Activated naive CD4-positive, alpha-beta T cell treated with anti-CD3 and anti-CD28 coated beads for 36 hours (primary cell): ENCODE measurements at regions of chr11 and their contacts with region 1.

Region 1: GRCh38 chr11:2400069-2400760 is at the start of gene TSSC4:
- DNase-seq: peak; percentile 99
- H3K4me3 Mint-ChIP-seq: peak within 1 kb of the TSS; percentile 84
- H3K27ac Mint-ChIP-seq: peak within 1 kb of the TSS; percentile 87
- H3K4me1 Mint-ChIP-seq: peaks cover 16% of the 10 kb centered on the region
- H3K27me3 Mint-ChIP-seq: no peaks in the 10 kb centered on the region
- total RNA-seq, gene TSSC4: 41.9 to 42.0 TPM

Region 2: GRCh38 chr11:2298795-2299761 is 101.1 kb before region 1 on chr11:
- CTCF ChIA-PET with region 1: interaction called, 38 read pairs
- intact Hi-C with region 1: loop called (anchors 1 kb)
- DNase-seq: peak; percentile 53
- H3K4me3 Mint-ChIP-seq: no peak overlapping the region
- H3K27ac Mint-ChIP-seq: peak overlapping the region; percentile 50
- H3K4me1 Mint-ChIP-seq: peaks cover 36% of the 10 kb centered on the region
- H3K27me3 Mint-ChIP-seq: no peaks in the 10 kb centered on the region

Region 3: GRCh38 chr11:2377511-2378443 is 22.4 kb before region 1 on chr11:
- CTCF ChIA-PET with region 1: interaction called, 7 read pairs
- intact Hi-C with region 1: loop called (anchors 1 kb)
- DNase-seq: peak; percentile 56
- H3K4me3 Mint-ChIP-seq: peak overlapping the region; percentile 84
- H3K27ac Mint-ChIP-seq: peak overlapping the region; percentile 79
- H3K4me1 Mint-ChIP-seq: peaks cover 32% of the 10 kb centered on the region
- H3K27me3 Mint-ChIP-seq: no peaks in the 10 kb centered on the region

Region 4: GRCh38 chr11:2444821-2445745 is 44.9 kb after region 1 on chr11 and contains the start of gene KCNQ1:
- CTCF ChIA-PET with region 1: no interaction called
- intact Hi-C with region 1: loop called (anchors 1 kb)
- DNase-seq: peak; percentile 40
- H3K4me3 Mint-ChIP-seq: peak within 1 kb of the TSS; percentile 89
- H3K27ac Mint-ChIP-seq: no peak within 1 kb of the TSS
- H3K4me1 Mint-ChIP-seq: peaks cover 26% of the 10 kb centered on the region
- H3K27me3 Mint-ChIP-seq: no peaks in the 10 kb centered on the region
- total RNA-seq, gene KCNQ1: 10.6 to 10.8 TPM

Region 5: GRCh38 chr11:2549876-2550620 is 149.8 kb after region 1 on chr11:
- CTCF ChIA-PET with region 1: no interaction called
- intact Hi-C with region 1: no loop called
- DNase-seq: no peak
- H3K4me3 Mint-ChIP-seq: no peak overlapping the region
- H3K27ac Mint-ChIP-seq: no peak overlapping the region
- H3K4me1 Mint-ChIP-seq: peaks cover 9% of the 10 kb centered on the region
- H3K27me3 Mint-ChIP-seq: no peaks in the 10 kb centered on the region

Region 6: GRCh38 chr11:2586087-2586792 is 186.0 kb after region 1 on chr11:
- CTCF ChIA-PET with region 1: no interaction called
- intact Hi-C with region 1: no loop called
- DNase-seq: no peak
- H3K4me3 Mint-ChIP-seq: no peak overlapping the region
- H3K27ac Mint-ChIP-seq: no peak overlapping the region
- H3K4me1 Mint-ChIP-seq: no peaks in the 10 kb centered on the region
- H3K27me3 Mint-ChIP-seq: no peaks in the 10 kb centered on the region

Region 7: DNA sequence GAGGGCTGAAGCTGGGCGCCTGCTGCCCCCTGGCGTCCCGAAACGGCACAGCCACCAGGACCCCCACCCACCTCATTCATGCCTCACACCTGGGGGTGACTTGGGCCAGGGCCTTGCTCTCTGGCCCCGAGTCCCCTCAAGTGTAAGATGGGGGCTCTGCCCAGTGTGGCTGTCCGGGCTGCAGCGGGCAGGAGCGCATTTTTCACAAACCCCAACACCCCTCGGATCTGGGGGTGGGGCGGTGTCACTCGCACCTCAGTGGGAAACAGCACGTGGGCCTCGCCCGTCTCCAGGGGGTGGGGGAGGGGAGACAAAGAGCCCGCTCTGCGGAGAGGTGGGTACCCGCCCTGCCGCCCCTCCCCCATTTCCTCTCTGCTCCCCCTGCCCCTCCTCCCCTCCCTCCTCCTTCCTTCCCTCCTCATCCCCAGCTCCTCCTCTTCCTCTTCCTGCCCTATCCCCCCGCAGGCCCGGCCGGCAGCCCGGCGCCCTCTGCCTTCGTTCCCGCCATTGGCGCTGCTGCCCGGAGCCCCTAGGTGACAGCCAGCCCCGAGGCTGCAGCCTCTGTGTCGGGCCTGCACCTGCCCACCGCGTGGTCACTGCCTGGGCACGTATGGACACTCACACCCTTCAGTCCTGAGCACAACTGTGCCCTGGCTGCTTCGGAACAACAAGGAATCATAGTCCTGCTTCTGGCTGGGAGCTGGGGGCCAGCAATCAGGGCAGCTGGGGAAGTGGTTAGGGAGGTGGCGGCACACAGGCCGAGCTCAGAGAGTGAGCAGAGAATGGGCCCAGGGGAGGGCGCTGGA is 492.2 kb after region 1 on chr11:
- CTCF ChIA-PET with region 1: no interaction called
- intact Hi-C with region 1: loop called (anchors 1 kb)
- DNase-seq: peak; percentile 79
- H3K4me3 Mint-ChIP-seq: peak overlapping the region; percentile 84
- H3K27ac Mint-ChIP-seq: peak overlapping the region; percentile 80
- H3K4me1 Mint-ChIP-seq: peaks cover 16% of the 10 kb centered on the region
- H3K27me3 Mint-ChIP-seq: no peaks in the 10 kb centered on the region